OCI-LY7 (cell line): ENCODE measurements at regions of chr4 and their contacts with region 1.

Region 1: DNA sequence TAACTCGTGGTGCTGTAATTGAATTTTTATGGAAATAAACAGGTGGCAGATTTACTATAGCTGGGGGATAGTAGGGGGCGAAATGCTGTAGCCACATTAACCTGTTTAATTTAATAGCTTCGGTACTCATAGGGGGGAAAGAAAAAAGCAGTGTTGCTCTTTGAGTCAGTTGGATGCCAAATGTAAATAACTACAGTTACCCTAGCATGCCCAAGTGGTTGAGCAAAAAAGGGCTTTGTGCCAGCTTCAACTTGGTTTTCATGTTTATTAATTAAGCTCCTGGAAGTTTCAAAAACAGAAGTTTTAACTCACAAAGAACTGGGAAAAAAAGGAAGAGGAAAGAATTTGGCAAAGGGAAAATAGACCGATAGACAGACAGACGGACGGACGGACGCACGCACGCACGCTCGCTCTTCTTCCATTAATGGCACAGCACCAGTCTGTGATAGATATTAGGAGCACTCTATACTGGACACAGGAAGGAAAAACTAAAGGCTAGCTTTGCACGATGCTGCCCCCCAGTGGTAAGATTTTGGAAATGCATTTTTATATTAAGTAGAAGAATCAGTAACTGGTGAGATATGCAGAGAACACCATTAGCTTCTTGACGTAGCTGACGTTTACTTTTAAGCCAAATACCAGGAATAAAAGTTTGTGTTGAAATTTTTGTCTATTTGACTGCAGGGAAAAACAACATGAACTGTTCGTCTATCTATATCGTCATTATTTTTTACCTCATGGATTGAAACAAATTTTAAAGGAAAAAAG is 151.8 kb downstream of the SLC7A11 start:
- DNase-seq: peak; percentile 66
- H3K4me3 ChIP-seq: no peak overlapping the region
- H3K27ac ChIP-seq: no peak overlapping the region
- H3K4me1 ChIP-seq: no peaks in the 10 kb centered on the region
- CTCF ChIP-seq: peak; percentile 92

Region 2: GRCh38 chr4:138182838-138183426 is 92.6 kb after region 1 on chr4:
- CTCF ChIA-PET with region 1: no interaction called
- POLR2A ChIA-PET with region 1: interaction called, 4 read pairs
- intact Hi-C with region 1: loop called (anchors 2 kb)
- DNase-seq: peak; percentile 60
- H3K4me3 ChIP-seq: no peak overlapping the region
- H3K27ac ChIP-seq: no peak overlapping the region
- H3K4me1 ChIP-seq: peaks cover 6% of the 10 kb centered on the region
- CTCF ChIP-seq: peak; percentile 86